HCT116 (cell line): ENCODE measurements at regions of chr3 and their contacts with region 1.

Region 1: DNA sequence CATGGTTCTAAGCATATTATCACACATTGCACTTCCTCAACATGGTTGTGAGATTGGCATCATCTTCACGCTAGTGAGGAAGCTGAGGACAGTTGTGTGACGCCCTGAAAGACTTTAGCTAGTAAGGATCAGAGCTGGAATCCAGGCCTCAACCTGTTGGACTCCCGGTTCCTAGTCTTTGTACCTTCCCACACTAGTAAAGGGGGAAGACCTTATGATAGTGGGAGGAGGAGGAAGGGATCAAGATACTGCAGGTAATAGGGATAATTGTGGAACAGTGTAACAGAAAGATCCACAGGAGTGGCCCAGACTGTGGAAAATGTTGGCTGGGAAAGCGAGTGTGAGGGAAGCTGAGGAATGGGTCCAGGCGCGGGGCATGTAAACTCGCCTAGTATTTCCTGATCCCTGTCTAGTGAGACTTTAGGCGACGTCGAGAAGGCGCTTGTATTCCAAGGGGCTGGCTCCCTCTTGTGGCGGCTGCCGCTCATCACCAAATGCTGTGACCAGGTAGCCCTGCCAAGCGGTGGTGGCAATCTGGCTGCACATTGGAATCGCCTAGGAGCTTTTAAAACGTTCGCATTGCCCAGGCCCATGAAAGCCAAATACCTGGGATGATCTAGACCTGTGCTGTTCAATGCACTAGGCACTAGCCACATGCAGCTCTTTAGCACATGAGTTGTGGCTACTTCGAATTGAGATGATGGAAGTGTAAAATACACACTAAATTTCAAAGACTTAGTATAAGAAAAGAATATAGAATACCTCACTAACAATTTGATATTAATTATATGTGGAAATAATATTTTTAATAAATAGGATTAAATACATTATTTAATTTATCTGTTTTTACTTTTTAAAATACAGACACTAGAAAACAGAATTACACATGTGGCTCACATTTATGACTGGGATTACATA is 38.8 kb upstream of the CLDN18 start:
- DNase-seq: peak; percentile 65
- ATAC-seq: peak; percentile 99
- H3K4me3 ChIP-seq: peak overlapping the region in 1 of 2 experiments; percentile 36; a peak in 2 of 4 replicates
- H3K27ac ChIP-seq: no peak overlapping the region
- H3K4me1 ChIP-seq: peaks cover 3 to 4% of the 10 kb centered on the region in 2 experiments; a peak in 2 of 4 replicates
- H3K27me3 ChIP-seq: no peaks in the 10 kb centered on the region; the same call in 1 of the 2 replicates
- CTCF ChIP-seq: peak; percentile 69 to 95 (median 93)
- POLR2A ChIP-seq: no peak
- RAD21 ChIP-seq: peak; percentile 84

Region 2: DNA sequence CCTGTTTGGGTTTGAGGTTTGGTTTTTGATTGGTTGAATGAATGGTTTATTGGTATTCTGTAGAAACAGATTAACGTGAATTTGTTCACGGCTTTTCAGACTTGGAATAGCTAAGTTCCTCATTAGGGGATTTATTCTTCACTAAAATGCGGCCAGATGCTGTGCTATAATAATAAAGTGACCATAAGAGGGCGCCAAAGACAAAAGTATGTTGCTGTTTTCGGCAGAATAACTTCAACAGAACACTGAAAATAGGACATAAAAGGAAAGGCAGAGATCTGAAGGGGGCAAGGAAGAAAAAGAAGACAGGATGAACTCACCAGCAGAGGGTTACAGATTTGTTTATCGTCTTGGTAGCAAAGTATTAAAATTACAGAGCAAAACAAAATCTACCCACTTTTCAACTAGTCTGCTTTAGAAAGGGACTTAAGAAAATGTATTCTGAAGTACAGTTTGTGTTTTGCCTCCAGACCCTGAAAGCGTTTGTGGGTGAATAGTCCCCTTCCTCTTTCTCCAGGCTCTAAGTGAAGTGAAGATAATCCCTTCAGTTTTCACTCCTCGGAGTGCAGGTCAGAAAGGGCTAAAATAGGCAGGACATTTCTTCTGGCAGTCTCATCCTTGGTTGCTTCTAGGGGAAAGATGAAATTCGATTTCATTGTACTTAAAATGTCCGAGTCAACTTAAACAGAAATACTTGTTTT is 865.7 kb before region 1 on chr3:
- CTCF ChIA-PET with region 1: interaction called, 7 read pairs
- POLR2A ChIA-PET with region 1: no interaction called
- RAD21 ChIA-PET with region 1: no interaction called
- intact Hi-C with region 1: loop called (anchors 1 kb)
- DNase-seq: peak; percentile 52
- ATAC-seq: peak; percentile 82
- H3K4me3 ChIP-seq: no peak overlapping the region
- H3K27ac ChIP-seq: no peak overlapping the region
- H3K4me1 ChIP-seq: no peaks in the 10 kb centered on the region
- H3K27me3 ChIP-seq: peaks cover 37% of the 10 kb centered on the region
- CTCF ChIP-seq: peak; percentile 52 to 85 (median 70); a peak in 5 of 6 replicates
- POLR2A ChIP-seq: no peak
- RAD21 ChIP-seq: peak; percentile 81

Region 3: GRCh38 chr3:137709011-137709601 is 262.1 kb before region 1 on chr3:
- CTCF ChIA-PET with region 1: interaction called, 7 read pairs
- POLR2A ChIA-PET with region 1: no interaction called
- RAD21 ChIA-PET with region 1: no interaction called
- intact Hi-C with region 1: loop called (anchors 2 kb)
- DNase-seq: peak; percentile 10
- ATAC-seq: peak; percentile 49; the same call in 1 of the 2 replicates
- H3K4me3 ChIP-seq: no peak overlapping the region
- H3K27ac ChIP-seq: no peak overlapping the region
- H3K4me1 ChIP-seq: no peaks in the 10 kb centered on the region
- H3K27me3 ChIP-seq: no peaks in the 10 kb centered on the region
- CTCF ChIP-seq: peak; percentile 53 to 71 (median 70); a peak in 5 of 6 replicates
- POLR2A ChIP-seq: no peak
- RAD21 ChIP-seq: peak; percentile 60

Region 4: DNA sequence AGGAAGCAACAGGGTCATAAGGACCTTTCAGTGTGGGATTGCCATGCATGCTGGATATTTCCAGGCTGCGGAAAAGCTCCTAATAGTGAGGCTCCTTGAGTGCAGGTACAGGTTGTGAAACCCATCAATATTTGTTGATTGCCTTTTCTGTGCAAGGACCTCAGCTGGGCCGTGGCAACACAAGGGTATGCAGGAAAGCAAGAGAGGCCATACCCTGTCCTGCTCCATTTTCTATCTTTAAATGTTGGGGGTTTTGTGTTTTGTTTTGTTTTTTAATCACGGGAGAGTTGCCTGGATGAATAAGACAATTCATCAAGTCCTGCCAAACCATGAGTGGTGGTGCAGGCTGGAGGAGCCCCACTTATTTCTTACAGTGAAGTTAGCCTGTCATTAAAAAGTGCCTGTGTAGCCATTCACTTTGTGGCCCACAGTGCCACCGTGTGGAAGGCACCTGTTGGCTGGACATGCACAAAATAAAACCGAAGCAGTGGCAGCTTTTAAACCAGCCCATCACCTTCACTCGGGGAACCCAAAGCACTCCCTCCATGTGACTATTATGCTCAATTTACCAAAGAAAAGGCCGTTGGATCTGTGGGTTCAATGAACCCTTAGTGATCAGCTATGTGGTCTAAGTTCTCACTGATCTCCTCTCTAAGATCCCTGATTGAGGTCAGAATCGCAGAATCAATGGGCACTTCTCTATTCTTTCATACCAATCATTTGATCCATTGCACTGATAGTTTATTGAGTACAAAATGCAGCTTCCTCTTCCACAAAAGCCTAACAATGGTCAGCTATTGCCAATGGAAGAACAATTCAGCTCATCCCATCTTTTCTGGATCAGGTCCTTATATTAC is 81.0 kb after region 1 on chr3:
- CTCF ChIA-PET with region 1: interaction called, 3 read pairs
- POLR2A ChIA-PET with region 1: no interaction called
- RAD21 ChIA-PET with region 1: no interaction called
- intact Hi-C with region 1: loop called (anchors 1 kb)
- DNase-seq: peak; percentile 12
- ATAC-seq: peak; percentile 96
- H3K4me3 ChIP-seq: no peak overlapping the region
- H3K27ac ChIP-seq: no peak overlapping the region
- H3K4me1 ChIP-seq: no peaks in the 10 kb centered on the region
- H3K27me3 ChIP-seq: no peaks in the 10 kb centered on the region
- CTCF ChIP-seq: peak; percentile 51 to 86 (median 79); a peak in 5 of 6 replicates
- POLR2A ChIP-seq: no peak
- RAD21 ChIP-seq: peak; percentile 73